Naive thymus-derived CD4-positive, alpha-beta T cell (primary cell): ENCODE measurements at regions of chr1 and their contacts with region 1.

Region 1: DNA sequence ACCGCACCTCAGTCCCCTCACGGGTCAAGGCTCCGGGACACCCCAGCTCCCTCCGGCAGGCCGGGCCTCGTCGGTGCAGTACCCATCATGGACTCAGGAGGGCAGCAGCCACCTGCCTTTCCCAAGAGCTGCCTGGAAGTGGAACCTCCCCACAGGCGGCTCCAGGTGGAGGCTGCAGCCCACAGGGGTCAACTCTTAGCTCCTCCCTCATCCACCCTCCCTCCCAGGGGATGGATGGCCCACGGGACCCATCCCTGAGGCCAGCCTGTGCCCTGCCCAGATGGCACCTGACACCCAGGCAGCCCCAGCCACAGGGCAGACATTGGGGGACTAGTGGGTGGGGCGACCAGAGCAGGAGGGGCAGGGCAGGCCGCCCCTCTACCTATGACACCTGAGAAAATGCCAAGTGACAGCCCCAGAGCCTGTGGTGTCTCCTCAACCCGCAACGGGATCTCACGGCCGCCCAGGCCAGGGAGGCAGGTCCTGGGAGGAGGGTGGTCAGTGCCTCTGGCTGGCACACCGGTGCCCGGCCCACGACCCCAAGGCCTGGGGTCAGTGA is 1.2 kb upstream of the ARHGEF16 start:
- DNase-seq: peak; percentile 53 to 78 (median 67)
- ATAC-seq: peak; percentile 89
- H3K4me3 ChIP-seq: no peak overlapping the region
- H3K4me3 Mint-ChIP-seq: peak overlapping the region in 9 of 10 donors; percentile 48 to 82 (median 69)
- H3K27ac ChIP-seq: no peak overlapping the region
- H3K27ac Mint-ChIP-seq: no peak overlapping the region
- H3K4me1 ChIP-seq: peaks cover 9 to 11% of the 10 kb centered on the region in 2 donors
- H3K4me1 Mint-ChIP-seq: peaks cover 0 to 4% (median 0%) of the 10 kb centered on the region in 7 donors
- H3K27me3 ChIP-seq: peaks cover 0 to 11% of the 10 kb centered on the region in 2 donors
- H3K27me3 Mint-ChIP-seq: peaks cover 6 to 24% (median 15%) of the 10 kb centered on the region in 5 donors

Region 2: DNA sequence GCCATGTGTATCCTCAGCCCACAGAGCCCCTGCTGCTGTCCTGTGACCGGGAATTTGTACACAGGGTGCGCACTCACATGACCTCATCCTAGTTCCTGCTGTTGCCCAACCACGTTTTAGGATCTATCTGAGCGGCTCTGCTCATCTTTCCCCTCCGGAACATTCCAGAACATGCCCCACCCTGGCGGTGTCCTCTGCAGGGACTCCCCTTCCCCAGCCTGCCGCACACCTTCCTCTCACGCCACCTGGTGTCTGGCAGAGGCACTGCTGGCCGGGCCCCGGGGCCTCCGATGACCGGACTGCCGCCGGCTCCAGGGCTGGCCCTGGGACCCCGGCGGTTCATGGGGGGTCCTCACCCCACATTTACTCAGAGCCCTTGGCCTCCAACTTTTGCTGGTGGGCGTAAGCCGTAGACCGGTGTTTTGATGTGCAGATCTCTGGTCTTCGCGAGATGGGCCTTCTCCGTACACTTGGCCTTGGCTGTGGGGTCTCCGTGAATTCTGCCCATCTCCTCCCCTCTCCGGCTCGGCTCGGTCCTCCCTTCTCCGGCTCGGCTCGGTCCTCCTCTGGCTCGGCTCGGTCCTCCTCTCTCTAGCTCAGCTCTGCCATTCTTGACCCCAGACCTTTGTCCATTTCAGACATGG is 30.6 kb after region 1 on chr1:
- CTCF ChIA-PET with region 1: no interaction called
- POLR2A ChIA-PET with region 1: no interaction called
- intact Hi-C with region 1: loop called (anchors 1 kb)
- DNase-seq: peak in 7 of 9 donors; percentile 21 to 64 (median 33)
- ATAC-seq: peak; percentile 59
- H3K4me3 ChIP-seq: no peak overlapping the region
- H3K4me3 Mint-ChIP-seq: peak overlapping the region in 1 of 10 donors; percentile 21
- H3K27ac ChIP-seq: no peak overlapping the region
- H3K27ac Mint-ChIP-seq: peak overlapping the region in 2 of 9 donors; percentile 46 to 60
- H3K4me1 ChIP-seq: no peaks in the 10 kb centered on the region
- H3K4me1 Mint-ChIP-seq: peaks cover 0 to 3% (median 0%) of the 10 kb centered on the region in 7 donors
- H3K27me3 ChIP-seq: no peaks in the 10 kb centered on the region
- H3K27me3 Mint-ChIP-seq: peaks cover 0 to 3% (median 0%) of the 10 kb centered on the region in 5 donors

Region 3: DNA sequence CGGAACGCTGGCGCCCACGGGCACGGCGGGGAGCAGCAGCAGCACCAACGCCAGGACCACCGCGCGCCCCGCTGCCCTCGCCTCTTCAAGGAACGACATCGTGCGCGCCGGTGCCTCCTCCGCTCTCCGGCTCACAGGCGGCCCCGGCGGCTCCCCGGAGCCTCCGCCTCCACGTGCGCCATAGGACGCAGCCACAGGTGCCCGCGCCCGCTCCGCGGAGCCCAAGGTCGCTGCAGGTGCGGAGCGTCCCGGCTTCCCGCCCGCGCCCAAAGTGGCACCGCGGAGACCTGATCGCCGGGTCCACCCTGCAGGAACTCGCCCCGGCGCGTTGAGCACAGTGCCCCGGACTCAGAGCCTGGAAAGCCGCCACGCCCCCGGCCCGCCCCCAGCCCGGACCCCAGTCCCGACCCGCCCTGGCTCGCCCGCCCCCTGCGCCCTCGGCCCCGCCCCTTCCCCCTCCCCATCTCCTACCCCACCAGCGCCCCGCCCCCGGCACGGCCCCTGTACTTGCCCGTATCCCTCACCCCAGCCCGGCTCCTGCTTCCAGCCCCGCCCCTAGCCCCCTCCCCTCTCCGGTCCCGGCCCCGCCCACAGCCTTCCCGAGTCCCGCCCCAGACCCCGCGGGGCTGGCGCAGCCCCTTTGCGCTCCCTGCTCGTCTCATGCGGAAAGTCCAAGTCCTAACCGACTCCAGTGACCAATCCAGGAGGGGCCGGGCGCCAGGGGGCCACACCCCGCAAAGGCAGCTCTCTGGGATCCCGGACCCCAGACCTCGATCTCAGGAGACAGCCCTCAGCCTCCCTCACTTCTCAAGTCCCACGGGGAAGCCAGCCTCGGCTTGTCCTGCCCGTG is 158.1 kb after region 1 on chr1 and contains the start of gene MEGF6:
- CTCF ChIA-PET with region 1: interaction called, 10 read pairs
- POLR2A ChIA-PET with region 1: no interaction called
- intact Hi-C with region 1: no loop called
- DNase-seq: peak in 4 of 9 donors; percentile 28 to 59 (median 36)
- ATAC-seq: peak; percentile 75
- H3K4me3 ChIP-seq: no peak within 1 kb of the TSS
- H3K4me3 Mint-ChIP-seq: peak within 1 kb of the TSS; percentile 30 to 86 (median 80)
- H3K27ac ChIP-seq: no peak within 1 kb of the TSS
- H3K27ac Mint-ChIP-seq: peak within 1 kb of the TSS in 2 of 9 donors; percentile 20 to 42
- H3K4me1 ChIP-seq: peaks cover 0 to 9% of the 10 kb centered on the region in 2 donors
- H3K4me1 Mint-ChIP-seq: peaks cover 0 to 10% (median 10%) of the 10 kb centered on the region in 7 donors
- H3K27me3 ChIP-seq: no peaks in the 10 kb centered on the region
- H3K27me3 Mint-ChIP-seq: peaks cover 0 to 34% (median 6%) of the 10 kb centered on the region in 5 donors
- total RNA-seq, gene MEGF6: 14.6 to 209 (median 81.3) TPM

Region 4: DNA sequence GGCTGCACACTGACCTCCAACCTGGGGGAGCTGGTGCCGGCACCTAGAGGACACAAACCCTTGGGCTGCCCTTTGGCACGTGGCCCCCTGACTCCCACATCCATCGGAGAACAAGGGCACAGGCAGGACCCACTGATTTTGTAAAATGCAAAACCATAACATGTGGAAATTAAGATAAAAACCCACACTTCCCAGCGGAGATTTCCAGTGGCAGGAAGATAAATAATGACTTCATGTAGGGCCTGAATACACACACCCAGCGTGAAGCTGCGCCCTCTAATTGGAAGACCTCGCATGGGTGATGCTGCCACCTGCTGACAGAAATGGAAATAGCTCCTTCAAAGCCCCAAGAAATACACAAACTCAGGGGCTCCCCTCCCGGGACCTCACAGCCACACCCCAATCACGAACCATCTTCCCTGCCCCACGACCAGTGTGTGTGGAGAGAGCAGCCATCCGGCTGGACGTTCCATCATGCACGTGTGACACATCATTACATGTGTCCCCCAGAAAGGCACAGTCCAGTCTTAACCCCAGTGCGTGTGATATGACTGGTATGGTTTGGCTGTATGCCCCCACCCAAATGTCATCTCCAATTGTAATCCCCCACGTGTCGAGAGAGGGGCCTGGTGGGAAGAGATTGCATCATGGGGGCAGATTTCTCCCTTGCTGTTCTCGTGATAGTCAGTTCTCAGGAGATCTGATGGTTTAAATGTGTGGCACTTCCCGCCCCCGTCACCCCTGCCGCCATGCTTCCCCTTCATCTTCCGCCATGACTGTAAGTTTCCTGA is 165.8 kb after region 1 on chr1:
- CTCF ChIA-PET with region 1: interaction called, 39 read pairs
- POLR2A ChIA-PET with region 1: no interaction called
- intact Hi-C with region 1: loop called (anchors 1 kb)
- DNase-seq: peak; percentile 47 to 82 (median 75)
- ATAC-seq: peak; percentile 96
- H3K4me3 ChIP-seq: no peak overlapping the region
- H3K4me3 Mint-ChIP-seq: peak overlapping the region in 2 of 10 donors; percentile 17 to 37
- H3K27ac ChIP-seq: no peak overlapping the region
- H3K27ac Mint-ChIP-seq: peak overlapping the region in 2 of 9 donors; percentile 1 to 59
- H3K4me1 ChIP-seq: peaks cover 11 to 15% of the 10 kb centered on the region in 2 donors
- H3K4me1 Mint-ChIP-seq: peaks cover 19 to 46% (median 34%) of the 10 kb centered on the region in 7 donors
- H3K27me3 ChIP-seq: no peaks in the 10 kb centered on the region
- H3K27me3 Mint-ChIP-seq: peaks cover 0 to 14% (median 6%) of the 10 kb centered on the region in 5 donors

Region 5: GRCh38 chr1:3721955-3722465 is 268.7 kb after region 1 on chr1:
- CTCF ChIA-PET with region 1: interaction called, 13 read pairs
- POLR2A ChIA-PET with region 1: no interaction called
- intact Hi-C with region 1: loop called in 1 of 2 experiments (anchors 1 kb)
- DNase-seq: no peak
- ATAC-seq: no peak
- H3K4me3 ChIP-seq: no peak overlapping the region
- H3K4me3 Mint-ChIP-seq: peak overlapping the region in 1 of 10 donors; percentile 39
- H3K27ac ChIP-seq: no peak overlapping the region
- H3K27ac Mint-ChIP-seq: peak overlapping the region in 1 of 9 donors; percentile 90
- H3K4me1 ChIP-seq: peaks cover 0 to 7% of the 10 kb centered on the region in 2 donors
- H3K4me1 Mint-ChIP-seq: peaks cover 0 to 12% (median 2%) of the 10 kb centered on the region in 7 donors
- H3K27me3 ChIP-seq: no peaks in the 10 kb centered on the region
- H3K27me3 Mint-ChIP-seq: no peaks in the 10 kb centered on the region

Region 6: GRCh38 chr1:3727042-3727824 is 274.0 kb after region 1 on chr1:
- CTCF ChIA-PET with region 1: interaction called, 13 read pairs
- POLR2A ChIA-PET with region 1: no interaction called
- intact Hi-C with region 1: loop called in 1 of 2 experiments (anchors 1 kb)
- DNase-seq: no peak
- ATAC-seq: peak; percentile 14
- H3K4me3 ChIP-seq: no peak overlapping the region
- H3K4me3 Mint-ChIP-seq: no peak overlapping the region
- H3K27ac ChIP-seq: no peak overlapping the region
- H3K27ac Mint-ChIP-seq: no peak overlapping the region
- H3K4me1 ChIP-seq: no peaks in the 10 kb centered on the region
- H3K4me1 Mint-ChIP-seq: peaks cover 0 to 4% (median 0%) of the 10 kb centered on the region in 7 donors
- H3K27me3 ChIP-seq: no peaks in the 10 kb centered on the region
- H3K27me3 Mint-ChIP-seq: peaks cover 0 to 18% (median 0%) of the 10 kb centered on the region in 5 donors